AG04450 (cell line): ENCODE measurements at regions of chr15 and their contacts with region 1.

Region 1: GRCh38 chr15:78481917-78482316 is 25.5 kb upstream of the HYKK start:
- DNase-seq: no peak
- H3K4me3 ChIP-seq: no peak overlapping the region
- H3K27ac ChIP-seq: no peak overlapping the region
- H3K27me3 ChIP-seq: no peaks in the 10 kb centered on the region
- CTCF ChIP-seq: no peak

Region 2: DNA sequence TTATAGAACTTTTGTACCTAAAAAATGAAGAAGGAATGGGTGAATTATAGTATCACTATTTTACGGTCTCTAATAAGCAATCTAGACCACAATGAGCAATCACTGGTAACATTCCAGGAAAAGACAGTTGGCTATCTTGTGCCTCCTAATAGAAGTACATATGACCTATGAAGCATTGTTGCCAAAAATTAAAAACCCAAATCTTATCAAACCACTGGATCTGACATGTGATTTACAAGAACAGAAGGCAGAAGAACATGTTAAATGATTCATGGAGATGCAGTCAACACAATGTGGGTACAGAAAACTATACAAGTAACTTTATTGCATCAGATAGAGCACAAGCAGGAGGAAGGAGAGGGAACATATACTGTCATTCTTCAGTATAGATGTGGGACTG is 11.0 kb after region 1 on chr15:
- CTCF ChIA-PET with region 1: interaction called, 13 read pairs
- POLR2A ChIA-PET with region 1: no interaction called
- DNase-seq: no peak
- H3K4me3 ChIP-seq: no peak overlapping the region
- H3K27ac ChIP-seq: no peak overlapping the region
- H3K27me3 ChIP-seq: no peaks in the 10 kb centered on the region
- CTCF ChIP-seq: no peak

Region 3: DNA sequence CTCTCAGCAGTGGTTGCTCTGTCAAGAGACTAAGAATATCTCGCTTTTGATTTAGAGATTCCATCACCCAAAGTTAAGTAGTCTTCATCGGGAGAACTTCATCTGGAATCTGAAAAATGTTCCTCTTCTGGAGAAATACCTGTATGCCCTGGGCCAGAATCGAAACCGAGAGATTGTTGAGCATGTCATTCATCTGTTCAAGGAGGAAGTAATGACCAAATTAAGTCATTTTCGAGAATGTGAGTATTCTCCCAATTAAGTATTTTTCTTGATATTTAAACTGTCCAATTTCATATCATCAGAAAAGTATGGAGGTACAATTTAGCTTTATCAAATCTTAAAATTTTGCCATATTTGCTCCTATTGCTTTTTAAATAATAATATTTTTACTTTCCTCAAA is 45.4 kb after region 1 on chr15:
- CTCF ChIA-PET with region 1: no interaction called
- POLR2A ChIA-PET with region 1: no interaction called
- DNase-seq: no peak
- H3K4me3 ChIP-seq: no peak overlapping the region
- H3K27ac ChIP-seq: no peak overlapping the region
- H3K27me3 ChIP-seq: no peaks in the 10 kb centered on the region
- CTCF ChIP-seq: no peak